ENCODE measurements at regions of chr6 and their contacts with region 1.

Region 1: DNA sequence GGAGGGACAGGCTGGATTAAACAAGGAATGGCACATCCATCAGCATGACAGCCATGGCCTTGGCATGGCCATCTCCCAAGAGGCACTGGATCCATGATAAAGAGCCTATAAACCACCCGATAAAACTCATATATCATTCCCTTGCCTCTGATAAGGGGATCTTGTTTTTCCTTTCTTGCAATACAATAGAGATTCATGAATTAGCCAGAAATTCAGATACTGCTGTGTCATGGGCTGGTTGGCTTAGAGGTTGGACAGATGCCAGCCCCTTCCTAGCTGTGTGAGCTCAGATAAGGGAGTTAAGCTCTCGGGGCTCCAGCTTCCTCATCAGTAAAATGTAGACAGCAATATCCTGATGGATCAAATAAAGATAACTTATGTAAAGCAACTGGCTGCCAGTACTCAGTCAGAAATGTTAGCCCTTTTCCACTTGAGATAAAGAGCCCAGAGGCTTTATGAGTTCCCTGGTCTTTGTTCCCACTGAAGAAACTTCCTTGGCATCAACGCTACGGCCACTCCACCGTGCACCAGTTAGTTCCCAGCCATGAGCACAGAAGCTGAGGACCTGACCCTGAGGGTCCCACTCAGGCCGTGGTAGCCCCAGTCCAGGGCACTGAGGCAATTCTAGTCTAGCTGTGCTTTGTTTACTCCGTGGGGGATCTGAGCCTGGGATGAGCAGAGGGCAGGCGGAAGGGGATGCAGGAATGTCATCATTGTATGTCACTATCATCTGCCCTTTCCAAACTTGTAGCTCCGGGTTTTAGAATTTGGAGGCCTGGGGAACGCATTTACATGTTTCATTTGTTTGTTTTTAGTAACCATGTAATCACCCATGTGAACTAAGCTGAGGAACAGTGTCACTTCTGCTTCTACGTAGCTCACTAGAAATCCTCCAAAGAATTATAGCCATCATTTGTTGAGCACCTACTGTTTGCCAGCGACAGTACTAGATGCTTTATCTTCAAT is 67.2 kb upstream of the TBC1D7 start:
- DNase-seq: peak; percentile 100
- H3K4me3 ChIP-seq: no peak overlapping the region
- H3K27ac ChIP-seq: peak overlapping the region; percentile 92
- H3K4me1 ChIP-seq: peaks cover 19% of the 10 kb centered on the region
- H3K27me3 ChIP-seq: no peaks in the 10 kb centered on the region
- CTCF ChIP-seq: no peak
- POLR2A ChIP-seq: peak; percentile 65

Region 2: DNA sequence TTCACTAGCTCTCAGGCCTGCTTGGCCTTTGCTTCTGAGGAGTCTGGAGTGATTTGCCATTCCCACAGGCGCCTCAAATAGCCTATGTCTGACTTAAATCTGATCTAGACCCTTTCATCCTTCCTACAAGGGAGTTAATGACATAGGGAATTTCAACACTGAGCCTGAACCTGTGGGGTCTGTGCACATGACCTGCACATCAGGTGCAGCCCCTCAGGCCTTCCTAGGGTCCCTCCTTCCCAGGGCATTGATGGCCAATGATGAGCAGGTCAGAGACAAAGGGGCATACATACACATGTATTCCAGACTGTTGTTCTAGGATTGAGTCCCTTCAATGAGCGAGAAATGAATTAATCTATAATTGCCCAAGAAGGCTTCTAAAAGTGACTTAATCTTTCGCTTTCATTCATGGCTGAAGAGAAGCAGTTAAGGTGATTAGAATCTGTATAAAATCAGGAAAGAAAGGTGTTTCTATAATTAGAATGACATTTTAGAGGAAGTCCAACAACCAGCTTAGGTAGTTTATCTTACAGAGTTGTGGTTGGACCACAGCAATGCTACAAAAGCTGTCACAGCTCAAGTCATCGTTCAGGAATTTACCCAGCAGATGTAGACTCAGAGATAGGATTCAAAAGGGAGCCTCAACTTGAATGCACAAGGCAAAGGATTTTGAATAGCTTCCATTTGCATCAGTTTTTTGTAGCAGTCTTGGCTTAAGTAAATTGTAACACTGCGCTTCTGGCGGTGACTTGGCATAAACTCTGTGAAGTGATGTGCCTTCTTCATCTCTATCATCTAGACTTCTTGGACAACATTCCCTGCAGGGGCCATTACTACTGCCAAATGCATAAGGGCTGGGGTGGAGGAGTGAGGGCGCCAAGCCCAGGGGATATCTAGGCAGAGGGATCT is 40.3 kb before region 1 on chr6:
- CTCF ChIA-PET with region 1: interaction called, 10 read pairs
- POLR2A ChIA-PET with region 1: no interaction called
- dilution Hi-C with region 1: no loop called
- intact Hi-C with region 1: loop called (anchors 1 kb)
- DNase-seq: peak; percentile 69
- H3K4me3 ChIP-seq: no peak overlapping the region
- H3K27ac ChIP-seq: peak overlapping the region; percentile 89
- H3K4me1 ChIP-seq: peaks cover 28% of the 10 kb centered on the region
- H3K27me3 ChIP-seq: no peaks in the 10 kb centered on the region
- CTCF ChIP-seq: no peak
- POLR2A ChIP-seq: no peak

Region 3: DNA sequence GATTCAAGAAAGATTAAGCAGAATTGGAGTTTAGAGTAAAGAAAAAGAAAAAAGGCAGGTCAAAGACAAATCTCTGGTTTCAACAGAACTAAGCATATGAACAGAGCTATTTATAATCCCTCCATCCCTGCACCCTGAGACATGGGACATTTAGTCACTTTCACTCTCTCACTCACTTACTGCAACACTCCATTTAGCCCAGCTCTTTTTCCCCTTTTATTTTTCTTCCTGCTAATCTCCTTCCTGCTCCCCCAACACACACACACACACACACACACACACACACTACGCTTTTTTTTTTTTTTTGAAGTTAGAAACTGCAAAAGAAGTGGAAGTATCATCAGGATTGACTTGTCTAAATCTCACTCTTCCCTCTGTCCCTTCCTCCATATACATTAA is 22.1 kb before region 1 on chr6:
- CTCF ChIA-PET with region 1: interaction called, 3 read pairs
- POLR2A ChIA-PET with region 1: no interaction called
- dilution Hi-C with region 1: no loop called
- intact Hi-C with region 1: loop called (anchors 2 kb)
- DNase-seq: peak; percentile 67
- H3K4me3 ChIP-seq: no peak overlapping the region
- H3K27ac ChIP-seq: no peak overlapping the region
- H3K4me1 ChIP-seq: peaks cover 12% of the 10 kb centered on the region
- H3K27me3 ChIP-seq: no peaks in the 10 kb centered on the region
- CTCF ChIP-seq: no peak
- POLR2A ChIP-seq: no peak

Region 4: GRCh38 chr6:13422681-13423221 is 27.2 kb after region 1 on chr6:
- CTCF ChIA-PET with region 1: interaction called, 7 read pairs
- POLR2A ChIA-PET with region 1: interaction called, 9 read pairs
- dilution Hi-C with region 1: no loop called
- intact Hi-C with region 1: loop called (anchors 1 kb)
- DNase-seq: peak; percentile 95
- H3K4me3 ChIP-seq: peak overlapping the region in 1 of 3 experiments; percentile 19
- H3K27ac ChIP-seq: peak overlapping the region; percentile 92
- H3K4me1 ChIP-seq: peaks cover 44% of the 10 kb centered on the region
- H3K27me3 ChIP-seq: no peaks in the 10 kb centered on the region
- CTCF ChIP-seq: no peak
- POLR2A ChIP-seq: no peak

Region 5: DNA sequence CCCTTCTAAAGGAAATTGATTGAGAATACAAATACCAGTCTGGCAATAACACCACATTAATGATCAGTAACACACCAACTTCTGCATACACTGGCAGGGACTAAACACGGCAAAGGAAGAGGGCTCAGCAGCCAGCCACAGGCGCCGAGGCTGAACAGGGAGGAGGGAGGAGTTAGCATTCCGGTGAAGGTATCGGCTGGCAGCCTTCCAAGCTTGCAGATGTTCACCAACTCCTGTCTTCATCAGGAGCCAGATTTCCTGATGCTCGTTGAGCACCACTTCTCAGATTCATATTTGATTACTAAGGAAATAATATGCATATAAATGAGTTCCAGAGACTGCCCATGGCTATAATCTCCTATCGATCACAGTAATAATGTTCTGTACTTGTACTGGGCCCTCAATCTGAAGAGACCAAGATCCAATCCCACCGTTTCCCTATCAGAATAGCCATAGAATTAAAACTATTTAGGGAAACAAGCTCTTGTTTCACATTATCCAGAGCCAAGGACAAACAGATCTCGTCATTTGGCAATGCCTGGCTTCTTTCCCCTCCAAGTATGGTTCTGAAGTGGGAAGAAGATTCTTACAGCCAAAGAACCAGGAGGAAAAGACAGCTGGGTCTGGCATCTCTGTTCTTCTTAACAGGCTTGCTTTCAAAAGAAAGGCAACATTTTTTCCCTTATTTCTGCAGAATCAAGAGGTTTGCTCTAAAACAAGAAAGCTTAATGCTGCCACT is 49.6 kb after region 1 on chr6:
- CTCF ChIA-PET with region 1: no interaction called
- POLR2A ChIA-PET with region 1: interaction called, 4 read pairs
- dilution Hi-C with region 1: no loop called
- intact Hi-C with region 1: loop called (anchors 2 kb)
- DNase-seq: peak; percentile 59
- H3K4me3 ChIP-seq: no peak overlapping the region
- H3K27ac ChIP-seq: no peak overlapping the region
- H3K4me1 ChIP-seq: peaks cover 24% of the 10 kb centered on the region
- H3K27me3 ChIP-seq: no peaks in the 10 kb centered on the region
- CTCF ChIP-seq: no peak
- POLR2A ChIP-seq: no peak

Region 6: GRCh38 chr6:13457577-13457976 is 62.0 kb after region 1 on chr6:
- CTCF ChIA-PET with region 1: no interaction called
- POLR2A ChIA-PET with region 1: no interaction called
- dilution Hi-C with region 1: no loop called
- intact Hi-C with region 1: no loop called
- DNase-seq: no peak
- H3K4me3 ChIP-seq: no peak overlapping the region
- H3K27ac ChIP-seq: no peak overlapping the region
- H3K4me1 ChIP-seq: peaks cover 11% of the 10 kb centered on the region
- H3K27me3 ChIP-seq: no peaks in the 10 kb centered on the region
- CTCF ChIP-seq: no peak
- POLR2A ChIP-seq: no peak

Region 7: GRCh38 chr6:13526727-13527670 is 131.4 kb after region 1 on chr6:
- CTCF ChIA-PET with region 1: no interaction called
- POLR2A ChIA-PET with region 1: no interaction called
- dilution Hi-C with region 1: no loop called
- intact Hi-C with region 1: loop called (anchors 1 kb)
- DNase-seq: peak; percentile 94
- H3K4me3 ChIP-seq: no peak overlapping the region
- H3K27ac ChIP-seq: peak overlapping the region; percentile 65
- H3K4me1 ChIP-seq: peaks cover 37% of the 10 kb centered on the region
- H3K27me3 ChIP-seq: no peaks in the 10 kb centered on the region
- CTCF ChIP-seq: no peak
- POLR2A ChIP-seq: peak; percentile 63